ENCODE measurements at regions of chr1 and their contacts with region 1.

Region 1: GRCh38 chr1:109282952-109283747 is at the start of gene PSRC1:
- DNase-seq: peak; percentile 96 to 98 (median 97)
- ATAC-seq: peak; percentile 99 to 100 (median 100)
- H3K4me3 ChIP-seq: peak within 1 kb of the TSS; percentile 16 to 77 (median 68)
- H3K27ac ChIP-seq: peak within 1 kb of the TSS; percentile 38 to 91 (median 84)
- H3K4me1 ChIP-seq: peaks cover 0 to 30% (median 13%) of the 10 kb centered on the region in 12 donors
- H3K27me3 ChIP-seq: no peaks in the 10 kb centered on the region
- CTCF ChIP-seq: peak; percentile 13 to 74 (median 42)
- POLR2A ChIP-seq: peak in 1 of 2 donors; percentile 74
- total RNA-seq, gene PSRC1: 0.23 to 3.6 (median 0.60) TPM in 8 of 9 donors, not detected in the other

Region 2: GRCh38 chr1:109298666-109299557 is 15.8 kb after region 1 on chr1:
- intact Hi-C with region 1: loop called in 1 of 10 experiments (anchors 1 kb)
- DNase-seq: peak in 4 of 5 donors; percentile 63 to 74 (median 72)
- ATAC-seq: peak; percentile 56 to 81 (median 72)
- H3K4me3 ChIP-seq: no peak overlapping the region
- H3K27ac ChIP-seq: peak overlapping the region in 11 of 12 donors; percentile 17 to 77 (median 68)
- H3K4me1 ChIP-seq: peaks cover 0 to 31% (median 25%) of the 10 kb centered on the region in 12 donors
- H3K27me3 ChIP-seq: peaks cover 0 to under 1% (median 0%) of the 10 kb centered on the region in 9 donors
- CTCF ChIP-seq: no peak
- POLR2A ChIP-seq: no peak

Region 3: GRCh38 chr1:109341944-109342930 is 59.1 kb after region 1 on chr1:
- intact Hi-C with region 1: loop called in 2 of 10 experiments (anchors 5 to 10 kb)
- DNase-seq: peak in 1 of 5 donors; percentile 15
- ATAC-seq: peak in 1 of 4 donors; percentile 34
- H3K4me3 ChIP-seq: no peak overlapping the region
- H3K27ac ChIP-seq: no peak overlapping the region
- H3K4me1 ChIP-seq: peaks cover 0 to 19% (median 10%) of the 10 kb centered on the region in 12 donors
- H3K27me3 ChIP-seq: no peaks in the 10 kb centered on the region
- CTCF ChIP-seq: no peak
- POLR2A ChIP-seq: no peak

Region 4: DNA sequence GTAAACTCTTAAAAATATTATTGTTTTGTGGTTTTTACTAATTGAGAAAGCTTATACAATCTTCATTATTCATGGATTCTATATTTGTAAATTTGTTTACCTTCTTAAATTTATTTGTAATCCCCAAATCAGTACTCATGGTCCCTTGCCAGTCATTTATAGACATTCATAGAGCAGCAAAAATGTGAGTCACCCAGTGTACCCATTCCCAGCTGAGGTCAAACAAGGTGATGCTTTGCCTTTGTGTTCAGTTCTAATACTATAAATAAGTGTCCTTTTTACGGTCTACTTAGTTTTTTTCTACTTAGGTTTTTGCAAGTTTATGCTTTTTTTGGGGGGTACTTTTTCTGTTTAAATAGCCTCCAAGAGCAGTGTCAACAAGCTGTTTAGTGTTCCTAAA is 78.5 kb after region 1 on chr1:
- intact Hi-C with region 1: loop called in 1 of 10 experiments (anchors 10 kb)
- DNase-seq: no peak
- ATAC-seq: peak in 1 of 4 donors; percentile 75
- H3K4me3 ChIP-seq: no peak overlapping the region
- H3K27ac ChIP-seq: peak overlapping the region in 2 of 12 donors; percentile 0 to 47
- H3K4me1 ChIP-seq: peaks cover 0 to 33% (median 20%) of the 10 kb centered on the region in 12 donors
- H3K27me3 ChIP-seq: no peaks in the 10 kb centered on the region
- CTCF ChIP-seq: no peak
- POLR2A ChIP-seq: no peak